ENCODE measurements at regions of chr3 and their contacts with region 1.

Region 1: GRCh38 chr3:168047190-168047795 is 48.4 kb downstream of the GOLIM4 start:
- DNase-seq: peak; percentile 87

Region 2: DNA sequence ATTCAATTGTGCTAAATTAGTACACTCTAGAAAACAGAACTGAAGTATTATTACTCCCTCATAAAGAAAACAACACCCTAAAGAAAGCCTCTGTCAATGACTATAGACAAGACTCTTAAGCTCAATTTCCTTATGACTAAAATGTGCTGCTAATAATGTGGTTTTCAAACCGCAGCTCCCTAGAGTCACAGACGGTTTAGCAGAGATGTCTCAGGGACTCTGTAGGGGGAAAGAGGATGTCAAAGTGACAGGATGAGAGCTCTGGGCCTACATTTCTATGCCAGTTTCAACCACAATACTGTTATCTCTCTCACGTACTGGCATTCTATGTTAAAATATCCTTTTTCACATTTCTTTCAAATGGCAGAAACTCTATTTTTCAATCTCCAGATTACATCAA is 355.9 kb before region 1 on chr3:
- in situ Hi-C with region 1: no loop called
- DNase-seq: peak; percentile 72

Region 3: GRCh38 chr3:167882067-167882667 is 165.1 kb before region 1 on chr3:
- in situ Hi-C with region 1: no loop called
- DNase-seq: peak; percentile 50

Region 4: GRCh38 chr3:167941234-167941995 is 105.9 kb before region 1 on chr3:
- in situ Hi-C with region 1: loop called (anchors 25 kb)
- DNase-seq: peak; percentile 95